CD4-positive, alpha-beta T cell (primary cell): ENCODE measurements at regions of chr2 and their contacts with region 1.

Region 1: DNA sequence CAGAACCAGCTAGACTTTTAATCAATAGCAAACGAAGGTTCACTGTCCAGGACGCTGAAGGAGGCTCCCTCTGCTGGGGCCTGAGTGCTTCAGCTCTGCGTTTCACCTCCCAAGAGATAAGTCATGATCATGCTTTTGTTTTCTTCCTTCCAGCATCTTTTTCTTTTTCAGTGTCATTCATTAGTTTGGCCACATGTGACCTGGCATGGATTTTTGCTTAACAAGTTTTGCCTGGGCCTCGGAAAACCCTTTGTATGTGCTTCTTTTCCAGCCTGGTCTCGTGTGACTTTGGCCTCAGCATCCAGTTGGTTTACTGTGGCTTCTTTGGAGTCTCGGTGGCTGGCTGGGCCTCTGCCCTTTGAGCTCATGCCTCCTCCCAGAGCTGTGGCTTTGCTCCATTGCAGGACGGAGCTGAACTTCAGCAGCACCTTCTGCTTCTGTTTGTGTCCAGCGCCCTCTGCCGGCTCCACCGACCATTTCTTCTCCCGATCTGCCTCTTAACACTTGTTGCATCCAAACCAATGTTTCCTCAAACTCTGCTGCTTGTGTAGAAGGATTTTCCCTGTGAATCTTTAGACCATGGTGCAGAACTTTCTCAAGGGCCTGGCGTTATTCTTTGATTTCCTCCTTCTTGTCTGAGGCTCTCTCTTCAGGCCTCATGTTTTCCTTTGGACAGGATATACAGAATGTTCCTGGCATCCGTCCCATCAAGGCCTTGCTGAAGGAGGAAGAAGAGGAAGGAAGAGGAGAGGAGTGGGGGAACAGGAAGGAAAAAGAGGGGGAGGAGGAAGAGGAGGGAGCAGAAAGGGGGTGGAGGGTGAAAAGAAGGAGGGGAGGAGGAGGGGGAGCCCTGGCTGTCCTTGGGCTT is 23.6 kb upstream of the HES6 start:
- DNase-seq: peak; percentile 59 to 86 (median 71)
- ATAC-seq: peak; percentile 70
- H3K4me3 ChIP-seq: no peak overlapping the region
- H3K4me3 Mint-ChIP-seq: no peak overlapping the region
- H3K27ac ChIP-seq: no peak overlapping the region
- H3K27ac Mint-ChIP-seq: no peak overlapping the region
- H3K4me1 ChIP-seq: peaks cover 8% of the 10 kb centered on the region
- H3K4me1 Mint-ChIP-seq: peaks cover 6% of the 10 kb centered on the region
- H3K27me3 ChIP-seq: no peaks in the 10 kb centered on the region
- H3K27me3 Mint-ChIP-seq: no peaks in the 10 kb centered on the region
- CTCF ChIP-seq: peak; percentile 85

Region 2: DNA sequence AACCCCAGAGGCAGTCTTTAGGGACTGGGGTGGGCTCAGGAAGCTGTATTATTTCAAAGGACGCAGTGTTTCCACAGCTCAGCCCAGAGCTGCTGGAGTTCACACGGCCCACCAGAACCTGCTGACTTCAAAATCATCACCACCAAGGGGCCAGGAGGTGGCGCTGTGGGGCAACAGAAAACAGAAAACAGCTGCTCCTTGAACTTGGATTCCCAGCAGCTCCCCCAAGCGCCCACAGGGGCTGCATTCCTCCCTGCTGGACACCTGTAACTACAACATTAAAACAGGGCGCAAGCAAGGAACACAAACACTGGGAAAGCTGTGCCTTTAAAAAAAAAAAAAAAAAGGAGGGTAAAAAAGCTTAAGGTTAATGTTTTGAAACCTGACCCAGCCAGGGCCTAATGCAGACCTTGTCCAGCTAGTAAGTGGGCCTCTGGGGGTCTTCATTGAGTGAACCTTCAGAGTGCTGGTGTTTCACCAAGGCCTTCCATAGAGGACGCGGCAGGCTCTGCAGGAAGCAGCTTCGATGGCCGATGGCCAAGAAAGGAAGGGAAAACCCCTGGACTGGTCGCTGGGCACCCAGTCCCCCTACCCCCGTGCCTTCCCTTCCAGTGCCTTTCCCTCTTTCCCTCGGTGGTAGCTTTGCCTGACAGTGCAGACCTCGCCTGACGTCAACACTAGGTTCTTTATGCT is 750.5 kb before region 1 on chr2:
- CTCF ChIA-PET with region 1: no interaction called
- POLR2A ChIA-PET with region 1: no interaction called
- intact Hi-C with region 1: loop called (anchors 1 to 5 kb)
- DNase-seq: peak; percentile 66 to 88 (median 74)
- ATAC-seq: peak; percentile 80
- H3K4me3 ChIP-seq: no peak overlapping the region
- H3K4me3 Mint-ChIP-seq: no peak overlapping the region
- H3K27ac ChIP-seq: no peak overlapping the region
- H3K27ac Mint-ChIP-seq: no peak overlapping the region
- H3K4me1 ChIP-seq: peaks cover 7% of the 10 kb centered on the region
- H3K4me1 Mint-ChIP-seq: no peaks in the 10 kb centered on the region
- H3K27me3 ChIP-seq: peaks cover 0 to 4% of the 10 kb centered on the region in 2 experiments
- H3K27me3 Mint-ChIP-seq: peaks cover 1% of the 10 kb centered on the region
- CTCF ChIP-seq: peak; percentile 84

Region 3: DNA sequence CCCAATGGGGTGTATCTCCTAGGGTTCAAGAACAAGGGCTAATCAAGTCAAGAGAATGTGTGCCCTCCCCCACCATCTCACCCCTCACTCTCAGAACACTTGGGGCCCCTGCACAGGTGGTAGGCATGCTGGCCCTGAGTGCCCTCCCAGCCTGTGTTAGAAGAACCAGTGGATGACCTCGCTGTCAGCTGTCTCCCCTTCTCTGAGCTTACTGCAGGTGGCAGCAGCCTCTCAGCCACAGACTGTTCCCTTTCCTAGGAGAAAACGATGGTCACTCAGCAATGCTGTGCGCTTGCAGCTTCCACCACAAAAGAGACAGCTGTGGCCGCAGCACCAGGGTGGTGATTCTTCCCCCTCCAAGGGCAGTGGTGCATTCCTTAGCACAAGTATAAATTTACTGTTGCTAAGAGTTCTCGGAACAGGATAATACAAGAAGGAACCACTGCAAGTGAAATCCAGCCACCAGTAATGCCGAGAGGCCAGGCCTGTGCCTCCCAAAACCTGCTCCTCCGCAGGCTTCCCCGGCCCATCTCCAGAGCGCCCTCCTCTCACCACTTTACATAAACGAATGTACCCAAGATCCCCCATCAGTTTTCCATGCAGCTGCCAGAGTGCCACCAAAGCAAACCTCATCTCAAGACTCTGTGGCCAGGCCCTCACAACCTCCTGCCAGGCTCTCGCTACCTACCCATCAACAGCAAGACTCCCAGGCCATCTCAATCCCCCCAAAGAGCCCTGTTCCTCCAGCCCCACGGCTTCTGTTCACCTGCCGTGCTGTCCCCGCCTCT is 404.9 kb before region 1 on chr2:
- CTCF ChIA-PET with region 1: no interaction called
- POLR2A ChIA-PET with region 1: interaction called, 3 read pairs
- intact Hi-C with region 1: loop called (anchors 1 kb)
- DNase-seq: peak in 9 of 14 experiments; percentile 11 to 73 (median 41)
- ATAC-seq: peak; percentile 64
- H3K4me3 ChIP-seq: no peak overlapping the region
- H3K4me3 Mint-ChIP-seq: peak overlapping the region; percentile 71
- H3K27ac ChIP-seq: no peak overlapping the region
- H3K27ac Mint-ChIP-seq: no peak overlapping the region
- H3K4me1 ChIP-seq: peaks cover 20% of the 10 kb centered on the region
- H3K4me1 Mint-ChIP-seq: peaks cover 5% of the 10 kb centered on the region
- H3K27me3 ChIP-seq: peaks cover 27 to 45% of the 10 kb centered on the region in 2 experiments
- H3K27me3 Mint-ChIP-seq: peaks cover 45% of the 10 kb centered on the region
- CTCF ChIP-seq: peak; percentile 47

Region 4: DNA sequence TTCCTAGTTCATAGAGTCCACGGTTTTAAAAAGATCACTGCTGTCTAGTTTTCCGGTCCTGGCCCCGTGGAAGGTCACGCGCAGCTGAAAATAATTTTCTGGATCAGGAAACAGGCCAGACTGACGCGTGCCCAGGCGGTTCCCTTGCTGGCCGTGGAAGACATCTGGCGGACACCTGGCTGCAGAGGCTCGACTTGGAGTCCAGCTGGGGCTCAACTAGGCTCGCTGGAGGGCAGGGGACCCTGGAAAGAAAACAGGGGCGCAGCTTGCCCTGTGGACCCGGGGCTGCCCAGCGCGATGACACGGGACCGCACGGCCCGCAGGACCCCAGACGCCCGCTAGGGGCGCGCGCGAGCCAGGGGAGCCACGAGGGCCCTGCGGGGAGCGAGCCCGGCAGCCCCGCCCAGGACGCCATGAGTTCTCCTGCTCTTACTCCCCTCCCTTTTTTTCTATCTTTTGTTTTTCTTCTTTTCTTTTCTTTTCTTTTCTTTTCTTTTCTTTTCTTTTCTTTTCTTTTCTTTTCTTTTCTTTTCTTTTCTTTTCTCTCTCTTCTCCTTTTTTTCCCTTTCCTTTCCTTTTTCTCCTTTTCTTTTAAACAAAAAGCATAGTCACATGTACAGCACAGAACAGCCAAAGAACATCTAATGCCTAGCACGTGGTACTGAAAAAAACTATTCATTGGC is 339.8 kb before region 1 on chr2:
- CTCF ChIA-PET with region 1: no interaction called
- POLR2A ChIA-PET with region 1: no interaction called
- intact Hi-C with region 1: loop called in 1 of 2 experiments (anchors 2 kb)
- DNase-seq: peak; percentile 38 to 91 (median 77)
- ATAC-seq: peak; percentile 99
- H3K4me3 ChIP-seq: peak overlapping the region; percentile 50
- H3K4me3 Mint-ChIP-seq: peak overlapping the region; percentile 54
- H3K27ac ChIP-seq: no peak overlapping the region
- H3K27ac Mint-ChIP-seq: no peak overlapping the region
- H3K4me1 ChIP-seq: peaks cover 20% of the 10 kb centered on the region
- H3K4me1 Mint-ChIP-seq: peaks cover 14% of the 10 kb centered on the region
- H3K27me3 ChIP-seq: no peaks in the 10 kb centered on the region
- H3K27me3 Mint-ChIP-seq: no peaks in the 10 kb centered on the region
- CTCF ChIP-seq: peak; percentile 94

Region 5: DNA sequence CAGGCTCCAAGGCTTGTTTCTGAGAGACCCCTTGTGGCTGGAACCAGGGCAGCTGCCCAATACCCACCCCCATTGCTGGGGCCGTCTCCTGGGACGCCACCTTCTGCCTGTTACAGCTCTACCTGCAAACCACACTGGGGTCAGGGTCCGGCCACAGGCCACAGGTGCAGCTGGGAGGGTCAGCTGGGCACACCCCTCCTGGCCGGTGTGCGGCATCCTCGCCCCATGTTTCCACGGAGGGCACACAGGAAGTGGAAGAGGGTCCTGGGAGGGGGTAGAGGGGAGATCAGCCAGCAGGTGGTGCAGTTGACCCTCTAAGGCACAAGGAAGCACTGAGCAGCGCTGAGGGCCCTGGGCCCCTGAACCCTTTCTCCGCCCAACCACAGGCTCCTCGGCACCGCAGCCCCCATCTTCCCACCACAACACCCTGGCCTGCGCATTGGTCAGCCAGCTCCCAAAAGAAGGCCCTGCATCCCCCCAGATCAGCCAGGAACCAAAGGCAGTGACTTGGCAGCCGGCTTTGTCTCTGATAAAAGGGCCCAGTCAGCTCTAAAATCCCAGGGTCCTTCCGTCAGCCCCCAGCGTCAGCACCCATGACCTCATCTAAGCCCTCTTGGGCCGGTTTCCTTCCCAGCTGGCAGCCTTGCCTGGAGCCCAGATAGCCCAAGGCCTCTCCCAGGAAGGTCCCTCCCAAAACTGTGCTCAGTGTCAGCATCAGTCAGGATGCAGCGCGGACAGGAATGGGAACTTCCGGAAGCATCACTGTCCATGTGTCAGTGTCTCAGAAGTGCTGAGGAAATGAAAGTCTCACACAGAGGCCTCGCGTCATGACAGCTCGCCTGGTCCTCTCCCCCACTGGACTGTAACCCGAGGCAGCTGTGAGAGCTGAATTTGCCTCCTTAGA is 103.0 kb before region 1 on chr2:
- CTCF ChIA-PET with region 1: no interaction called
- POLR2A ChIA-PET with region 1: no interaction called
- intact Hi-C with region 1: loop called in 1 of 2 experiments (anchors 1 kb)
- DNase-seq: peak in 2 of 14 experiments; percentile 15 to 25
- ATAC-seq: no peak
- H3K4me3 ChIP-seq: no peak overlapping the region
- H3K4me3 Mint-ChIP-seq: peak overlapping the region; percentile 20
- H3K27ac ChIP-seq: no peak overlapping the region
- H3K27ac Mint-ChIP-seq: no peak overlapping the region
- H3K4me1 ChIP-seq: peaks cover 18% of the 10 kb centered on the region
- H3K4me1 Mint-ChIP-seq: peaks cover 17% of the 10 kb centered on the region
- H3K27me3 ChIP-seq: peaks cover 23 to 36% of the 10 kb centered on the region in 2 experiments
- H3K27me3 Mint-ChIP-seq: peaks cover 45% of the 10 kb centered on the region
- CTCF ChIP-seq: peak; percentile 22